Naive thymus-derived CD4-positive, alpha-beta T cell (primary cell): ENCODE measurements at regions of chr1 and their contacts with region 1.

Region 1: GRCh38 chr1:220565670-220566069 is 37.7 kb downstream of the MARK1 start:
- DNase-seq: no peak
- ATAC-seq: no peak
- H3K4me3 ChIP-seq: no peak overlapping the region
- H3K4me3 Mint-ChIP-seq: no peak overlapping the region
- H3K27ac ChIP-seq: no peak overlapping the region
- H3K27ac Mint-ChIP-seq: no peak overlapping the region
- H3K4me1 ChIP-seq: no peaks in the 10 kb centered on the region
- H3K4me1 Mint-ChIP-seq: no peaks in the 10 kb centered on the region
- H3K27me3 ChIP-seq: no peaks in the 10 kb centered on the region
- H3K27me3 Mint-ChIP-seq: peaks cover 0 to 25% (median 13%) of the 10 kb centered on the region in 5 donors

Region 2: GRCh38 chr1:220483700-220484099 is 82.0 kb before region 1 on chr1:
- CTCF ChIA-PET with region 1: no interaction called
- POLR2A ChIA-PET with region 1: no interaction called
- intact Hi-C with region 1: no loop called
- DNase-seq: no peak
- ATAC-seq: no peak
- H3K4me3 ChIP-seq: no peak overlapping the region
- H3K4me3 Mint-ChIP-seq: no peak overlapping the region
- H3K27ac ChIP-seq: no peak overlapping the region
- H3K27ac Mint-ChIP-seq: no peak overlapping the region
- H3K4me1 ChIP-seq: no peaks in the 10 kb centered on the region
- H3K4me1 Mint-ChIP-seq: no peaks in the 10 kb centered on the region
- H3K27me3 ChIP-seq: no peaks in the 10 kb centered on the region
- H3K27me3 Mint-ChIP-seq: peaks cover 0 to 19% (median 15%) of the 10 kb centered on the region in 5 donors

Region 3: DNA sequence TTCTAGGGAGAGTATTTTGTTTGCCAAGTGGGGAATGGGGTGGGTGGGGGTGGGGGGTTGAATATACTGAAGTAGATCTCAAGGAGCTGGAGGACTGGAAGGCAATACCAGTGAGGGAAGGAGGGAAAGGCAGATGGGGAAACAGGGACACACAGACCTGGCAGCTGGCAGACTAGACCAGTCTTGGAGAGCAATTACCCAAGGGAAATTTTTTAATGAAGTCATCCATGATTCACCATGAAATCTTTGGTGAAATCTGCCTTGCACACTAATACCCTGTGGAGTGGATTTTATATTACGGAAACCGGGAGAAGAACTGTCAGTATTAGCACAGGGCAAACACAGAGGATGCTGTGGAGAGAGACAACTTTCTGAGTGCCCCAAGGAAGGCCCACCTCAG is 67.5 kb before region 1 on chr1:
- CTCF ChIA-PET with region 1: interaction called, 10 read pairs
- POLR2A ChIA-PET with region 1: no interaction called
- intact Hi-C with region 1: no loop called
- DNase-seq: no peak
- ATAC-seq: no peak
- H3K4me3 ChIP-seq: no peak overlapping the region
- H3K4me3 Mint-ChIP-seq: no peak overlapping the region
- H3K27ac ChIP-seq: no peak overlapping the region
- H3K27ac Mint-ChIP-seq: no peak overlapping the region
- H3K4me1 ChIP-seq: no peaks in the 10 kb centered on the region
- H3K4me1 Mint-ChIP-seq: no peaks in the 10 kb centered on the region
- H3K27me3 ChIP-seq: peaks cover 0 to 6% of the 10 kb centered on the region in 2 donors
- H3K27me3 Mint-ChIP-seq: peaks cover 2 to 36% (median 33%) of the 10 kb centered on the region in 5 donors

Region 4: DNA sequence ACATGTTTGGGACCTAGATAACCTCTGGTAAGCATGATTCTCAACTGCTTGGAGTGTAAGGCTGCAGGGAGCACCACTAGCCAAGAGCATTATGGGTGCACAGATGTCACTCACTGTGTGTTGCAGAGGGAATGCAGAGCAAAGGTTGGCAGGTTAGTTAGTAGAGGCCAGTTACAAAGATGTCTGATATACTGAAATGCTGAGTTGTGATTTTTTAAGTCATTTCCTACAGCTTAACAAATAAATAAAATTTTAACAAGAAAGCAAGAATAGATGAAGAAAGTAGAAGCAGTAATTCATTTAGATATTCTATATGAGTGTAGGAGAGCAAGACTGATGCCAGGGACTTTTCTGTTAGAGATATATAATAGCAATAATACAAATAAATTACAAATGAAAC is 27.0 kb after region 1 on chr1:
- CTCF ChIA-PET with region 1: no interaction called
- POLR2A ChIA-PET with region 1: no interaction called
- intact Hi-C with region 1: no loop called
- DNase-seq: no peak
- ATAC-seq: no peak
- H3K4me3 ChIP-seq: no peak overlapping the region
- H3K4me3 Mint-ChIP-seq: no peak overlapping the region
- H3K27ac ChIP-seq: no peak overlapping the region
- H3K27ac Mint-ChIP-seq: no peak overlapping the region
- H3K4me1 ChIP-seq: no peaks in the 10 kb centered on the region
- H3K4me1 Mint-ChIP-seq: no peaks in the 10 kb centered on the region
- H3K27me3 ChIP-seq: no peaks in the 10 kb centered on the region
- H3K27me3 Mint-ChIP-seq: peaks cover 0 to 21% (median 10%) of the 10 kb centered on the region in 5 donors